ENCODE measurements at regions of chr10 and their contacts with region 1.

Region 1: GRCh38 chr10:89563861-89564478 is 28.6 kb upstream of the SLC16A12 start:
- DNase-seq: peak in 2 of 5 donors; percentile 73 to 77
- H3K4me3 ChIP-seq: no peak overlapping the region
- H3K27ac ChIP-seq: no peak overlapping the region
- H3K4me1 ChIP-seq: peaks cover 0 to 7% (median 2%) of the 10 kb centered on the region in 3 donors
- H3K27me3 ChIP-seq: no peaks in the 10 kb centered on the region
- CTCF ChIP-seq: peak; percentile 85

Region 2: GRCh38 chr10:89426230-89426868 is 137.6 kb before region 1 on chr10:
- intact Hi-C with region 1: loop called (anchors 5 kb)
- DNase-seq: peak in 3 of 5 donors; percentile 19 to 81 (median 81)
- H3K4me3 ChIP-seq: no peak overlapping the region
- H3K27ac ChIP-seq: peak overlapping the region; percentile 21 to 58
- H3K4me1 ChIP-seq: peaks cover 0 to 38% (median 4%) of the 10 kb centered on the region in 3 donors
- H3K27me3 ChIP-seq: no peaks in the 10 kb centered on the region
- CTCF ChIP-seq: peak; percentile 84

Region 3: DNA sequence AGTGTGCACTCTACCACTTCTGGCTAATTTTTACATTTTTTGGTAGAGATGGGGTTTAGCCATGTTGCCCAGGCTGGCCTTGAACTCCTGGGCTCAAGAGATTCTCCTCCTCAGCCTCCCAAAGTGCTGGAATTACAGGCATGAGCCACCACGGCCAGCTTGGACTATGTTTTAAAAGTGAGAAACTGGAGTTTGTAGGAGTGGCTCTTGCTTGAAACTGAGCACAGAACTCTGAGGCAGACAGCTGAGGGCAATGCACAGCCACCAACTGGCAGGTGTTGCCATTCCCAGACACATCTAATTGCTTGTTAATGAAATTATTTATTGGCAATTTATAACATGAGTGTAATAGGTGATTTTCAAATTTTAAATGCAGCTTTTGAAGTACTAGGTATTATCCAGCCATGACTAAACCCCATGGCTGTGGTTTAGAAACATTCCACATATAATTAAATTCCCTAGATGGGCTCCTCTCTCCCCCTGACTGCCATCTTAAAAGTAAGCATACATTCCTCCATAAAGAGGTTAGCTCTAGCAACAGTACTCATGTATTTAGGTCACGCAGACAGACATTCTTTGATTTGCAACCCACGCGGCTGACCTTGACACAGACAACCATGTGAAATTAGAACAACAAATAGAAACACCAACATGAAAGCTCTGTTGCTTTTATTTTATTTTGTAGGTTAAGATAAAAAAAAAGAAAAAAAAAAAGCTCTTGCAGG is 61.2 kb after region 1 on chr10:
- intact Hi-C with region 1: no loop called
- DNase-seq: peak in 3 of 5 donors; percentile 42 to 66 (median 54)
- H3K4me3 ChIP-seq: no peak overlapping the region
- H3K27ac ChIP-seq: peak overlapping the region; percentile 17 to 25
- H3K4me1 ChIP-seq: peaks cover 6 to 9% (median 7%) of the 10 kb centered on the region in 3 donors
- H3K27me3 ChIP-seq: no peaks in the 10 kb centered on the region
- CTCF ChIP-seq: no peak

Region 4: GRCh38 chr10:89701238-89702120 is 137.5 kb after region 1 on chr10 and contains the start of gene KIF20B:
- intact Hi-C with region 1: no loop called
- DNase-seq: peak; percentile 97 to 98 (median 98)
- H3K4me3 ChIP-seq: peak within 1 kb of the TSS; percentile 88 to 99 (median 89)
- H3K27ac ChIP-seq: peak within 1 kb of the TSS; percentile 85 to 86
- H3K4me1 ChIP-seq: peaks cover 0 to 8% (median 2%) of the 10 kb centered on the region in 3 donors
- H3K27me3 ChIP-seq: no peaks in the 10 kb centered on the region
- CTCF ChIP-seq: peak; percentile 52
- total RNA-seq, gene KIF20B: 7.3 TPM

Measured in kidney (tissue), 22 donors.